Right ventricle myocardium inferior (tissue), 1 donor: ENCODE measurements at regions of chr11 and their contacts with region 1.

Region 1: DNA sequence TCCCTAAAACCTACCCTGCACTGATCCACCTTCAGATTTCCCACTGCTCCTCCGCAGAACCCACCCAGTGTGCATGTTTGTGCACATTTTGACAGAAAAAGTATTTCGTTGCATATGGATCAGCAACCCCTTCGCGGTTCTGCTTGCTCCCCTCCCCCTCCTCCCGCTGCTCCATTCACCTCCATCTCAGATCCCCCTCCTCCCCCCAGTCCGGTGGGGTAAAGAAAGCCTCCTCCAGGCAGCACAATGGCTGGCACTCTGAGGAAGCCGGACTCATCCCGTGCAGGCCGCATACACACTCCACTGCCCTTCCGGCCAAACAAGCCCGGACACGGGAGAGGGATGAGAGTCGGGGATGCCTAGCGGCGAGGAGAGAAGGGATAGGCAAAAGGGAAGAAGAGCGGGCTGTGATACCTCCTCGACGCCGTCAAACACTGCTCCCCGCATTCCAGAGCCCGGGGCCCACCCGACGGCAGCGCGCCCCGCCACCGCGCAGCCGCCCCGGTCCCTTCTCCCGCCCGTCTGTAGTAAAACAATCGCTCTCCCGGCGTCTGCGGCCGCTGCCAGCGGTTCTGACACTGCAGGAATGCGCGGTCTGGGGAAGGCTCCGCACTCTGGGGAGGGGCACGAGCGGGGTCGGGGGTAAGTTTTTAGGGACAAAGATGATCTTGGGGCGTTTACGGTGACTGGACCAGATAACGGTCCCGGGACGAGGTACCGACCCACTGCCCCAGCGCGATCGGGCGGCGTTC is 915 bp downstream of the FEZ1 start:
- DNase-seq: peak; percentile 71
- ATAC-seq: peak; percentile 69

Region 2: DNA sequence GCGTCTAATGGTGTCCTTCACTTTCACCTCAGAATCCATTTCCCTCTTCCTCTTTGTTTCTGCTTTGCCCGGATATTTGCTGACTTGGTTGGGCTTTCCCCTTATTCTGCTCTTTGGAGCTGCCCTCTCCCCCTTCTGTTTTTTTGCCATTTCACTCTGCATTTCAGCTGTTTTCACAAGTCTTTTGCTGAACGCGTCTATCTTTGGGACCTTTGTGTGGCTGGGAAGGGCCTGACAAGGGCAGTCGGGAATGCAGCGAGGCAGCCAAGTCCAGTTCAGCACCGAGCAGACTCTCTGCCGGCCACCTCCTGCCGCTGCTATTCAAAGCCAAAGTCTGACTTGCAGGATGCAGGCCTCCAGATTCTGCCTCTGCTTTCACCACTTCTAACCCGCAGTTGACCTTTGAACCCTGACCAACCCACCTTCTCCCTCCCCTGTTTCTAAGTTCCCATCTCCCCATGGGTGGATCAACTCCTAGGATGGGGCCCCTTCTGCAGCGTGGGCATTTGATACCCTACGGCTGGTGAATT is 37.3 kb before region 1 on chr11:
- intact Hi-C with region 1: loop called (anchors 5 kb)
- DNase-seq: peak; percentile 85
- ATAC-seq: peak; percentile 97

Region 3: GRCh38 chr11:125588505-125588904 is 93.4 kb after region 1 on chr11:
- intact Hi-C with region 1: no loop called
- DNase-seq: no peak
- ATAC-seq: no peak

Region 4: GRCh38 chr11:125625630-125626287 is 130.6 kb after region 1 on chr11:
- intact Hi-C with region 1: loop called (anchors 5 kb)
- DNase-seq: peak; percentile 92
- ATAC-seq: peak; percentile 97